PC-9 (cell line): ENCODE measurements at regions of chr11 and their contacts with region 1.

Region 1: DNA sequence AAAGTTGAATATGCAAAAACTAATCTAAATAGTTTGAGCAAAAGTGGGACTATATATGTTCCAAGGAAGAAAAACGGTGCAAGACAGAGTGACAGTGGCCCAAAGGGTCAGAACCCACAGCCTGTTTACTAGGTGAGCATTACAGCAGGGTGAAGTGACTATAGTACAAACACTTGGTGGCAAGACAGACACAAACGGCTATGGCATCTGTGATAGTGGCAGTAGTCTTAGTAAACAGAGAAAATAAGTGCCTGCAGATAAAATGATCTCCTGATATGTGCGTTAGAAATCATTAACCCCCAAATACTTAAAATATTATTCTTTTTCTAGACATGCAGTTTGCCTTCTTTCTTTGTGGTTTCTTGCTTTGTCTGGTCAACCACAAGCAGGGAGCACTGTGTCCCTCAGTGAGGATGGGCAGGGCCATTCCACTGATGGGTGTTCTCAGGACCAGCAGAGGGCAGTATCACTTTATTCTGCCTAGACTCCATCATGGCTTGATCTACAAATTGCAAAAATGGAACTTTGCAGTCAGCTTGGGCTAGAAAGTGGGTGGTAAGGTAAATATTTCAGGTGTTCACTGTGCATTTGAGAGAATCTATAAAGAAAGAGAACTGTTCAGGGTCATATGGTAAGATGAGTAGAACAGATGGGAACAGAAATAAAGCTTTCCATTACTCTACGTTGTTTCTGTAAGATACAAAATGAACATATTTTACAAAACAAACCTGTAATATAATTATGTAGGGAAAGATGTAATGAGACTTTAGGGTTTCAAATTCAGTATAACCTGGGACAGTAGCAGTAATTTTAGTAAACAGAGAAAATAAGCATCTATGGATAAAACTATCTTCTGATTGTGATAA is 198.2 kb downstream of the SWAP70 start:
- DNase-seq: peak; percentile 37 to 41
- H3K4me3 ChIP-seq: no peak overlapping the region
- H3K27ac ChIP-seq: no peak overlapping the region
- H3K4me1 ChIP-seq: no peaks in the 10 kb centered on the region
- H3K27me3 ChIP-seq: no peaks in the 10 kb centered on the region
- CTCF ChIP-seq: peak; percentile 66

Region 2: DNA sequence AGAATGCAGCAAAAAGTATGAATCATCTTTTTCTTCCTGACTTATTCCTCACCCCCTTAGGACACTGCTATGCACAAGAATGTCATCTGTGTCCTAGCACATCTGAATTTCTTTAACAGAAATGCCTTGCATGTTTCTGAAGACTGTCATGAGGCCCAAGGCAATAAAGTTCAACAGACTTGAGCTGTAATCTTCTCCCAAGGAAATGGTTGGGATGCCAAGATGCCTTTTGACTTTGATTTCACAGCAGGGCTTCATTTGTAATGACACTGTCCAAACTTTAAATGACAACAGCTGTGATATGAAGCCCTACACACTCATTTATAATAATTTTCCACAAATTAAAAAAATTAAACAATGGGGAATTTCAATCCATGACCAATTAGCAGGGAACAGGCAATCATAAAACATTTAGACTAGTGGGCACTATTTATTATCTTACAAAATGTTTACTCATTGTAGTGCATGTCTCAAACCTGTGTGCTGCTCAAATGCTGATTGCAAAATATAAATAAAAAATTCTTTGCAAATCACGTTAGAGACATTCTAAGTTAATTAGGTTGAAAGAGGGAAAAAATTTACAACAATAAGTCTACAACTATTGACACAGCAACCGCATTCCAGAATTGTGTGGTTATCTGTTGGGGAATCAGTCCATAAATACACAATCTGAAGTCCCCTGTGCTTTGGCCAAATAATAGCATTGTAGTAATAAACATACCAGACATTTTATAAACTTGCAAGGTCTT is 44.1 kb after region 1 on chr11:
- CTCF ChIA-PET with region 1: interaction called, 18 read pairs
- POLR2A ChIA-PET with region 1: no interaction called
- intact Hi-C with region 1: no loop called
- DNase-seq: peak; percentile 35 to 98
- H3K4me3 ChIP-seq: 0 out of 2 replicates have a peak overlapping the region, but pooled peaks have one; percentile 0
- H3K27ac ChIP-seq: peak overlapping the region; percentile 92
- H3K4me1 ChIP-seq: peaks cover 37% of the 10 kb centered on the region
- H3K27me3 ChIP-seq: no peaks in the 10 kb centered on the region
- CTCF ChIP-seq: no peak

Region 3: GRCh38 chr11:9972989-9973388 is 110.9 kb after region 1 on chr11:
- CTCF ChIA-PET with region 1: no interaction called
- POLR2A ChIA-PET with region 1: no interaction called
- intact Hi-C with region 1: loop called (anchors 1 kb)
- DNase-seq: no peak
- H3K4me3 ChIP-seq: no peak overlapping the region
- H3K27ac ChIP-seq: no peak overlapping the region
- H3K4me1 ChIP-seq: no peaks in the 10 kb centered on the region
- H3K27me3 ChIP-seq: no peaks in the 10 kb centered on the region
- CTCF ChIP-seq: peak; percentile 74